MCF 10A (cell line): ENCODE measurements at regions of chr18 and their contacts with region 1.

Region 1: GRCh38 chr18:21242141-21242779 is at the start of gene GREB1L:
- DNase-seq: peak; percentile 67
- H3K4me3 Mint-ChIP-seq: peak within 1 kb of the TSS; percentile 78
- H3K27ac Mint-ChIP-seq: peak within 1 kb of the TSS; percentile 49
- H3K4me1 Mint-ChIP-seq: peaks cover 5% of the 10 kb centered on the region
- H3K27me3 Mint-ChIP-seq: no peaks in the 10 kb centered on the region
- CTCF ChIP-seq: peak; percentile 35
- total RNA-seq, gene GREB1L: 9.4 and 11.0 TPM in 2 replicates

Region 2: GRCh38 chr18:21257386-21257785 is 15.1 kb after region 1 on chr18:
- CTCF ChIA-PET with region 1: interaction called, 10 read pairs
- POLR2A ChIA-PET with region 1: interaction called, 9 read pairs
- intact Hi-C with region 1: no loop called
- DNase-seq: no peak
- H3K4me3 Mint-ChIP-seq: no peak overlapping the region
- H3K27ac Mint-ChIP-seq: no peak overlapping the region
- H3K4me1 Mint-ChIP-seq: peaks cover 3% of the 10 kb centered on the region
- H3K27me3 Mint-ChIP-seq: no peaks in the 10 kb centered on the region
- CTCF ChIP-seq: no peak

Region 3: GRCh38 chr18:21315741-21316187 is 73.5 kb after region 1 on chr18:
- CTCF ChIA-PET with region 1: no interaction called
- POLR2A ChIA-PET with region 1: no interaction called
- intact Hi-C with region 1: no loop called
- DNase-seq: no peak
- H3K4me3 Mint-ChIP-seq: no peak overlapping the region
- H3K27ac Mint-ChIP-seq: no peak overlapping the region
- H3K4me1 Mint-ChIP-seq: peaks cover 19% of the 10 kb centered on the region
- H3K27me3 Mint-ChIP-seq: no peaks in the 10 kb centered on the region
- CTCF ChIP-seq: no peak

Region 4: DNA sequence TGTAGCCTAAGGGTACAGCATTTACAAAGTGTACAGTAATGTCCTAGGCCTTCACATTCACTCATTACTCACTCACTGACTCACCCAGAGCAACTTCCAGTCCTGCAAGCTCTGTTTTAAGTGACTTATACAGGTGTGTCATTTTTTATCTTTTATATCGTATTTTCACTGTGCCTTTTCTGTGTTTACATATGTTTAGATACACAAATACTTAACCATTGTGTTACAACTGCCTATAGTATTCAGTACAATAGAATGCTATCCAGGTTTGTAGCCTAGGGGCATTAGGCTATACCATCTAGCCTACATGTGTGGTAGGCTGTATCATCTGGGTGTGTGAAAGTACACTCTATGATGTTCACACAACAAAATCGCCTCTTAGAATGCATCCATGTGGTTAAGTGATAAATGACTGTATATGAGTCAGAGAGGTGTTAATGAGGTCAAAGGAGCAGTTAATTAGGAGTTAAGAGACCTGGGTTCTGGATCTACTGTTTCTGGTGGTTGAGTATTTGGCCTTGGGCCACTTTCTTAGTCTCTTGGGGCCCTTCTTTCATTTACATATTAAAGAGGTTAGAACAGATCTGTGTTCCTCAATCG is 148.9 kb after region 1 on chr18:
- CTCF ChIA-PET with region 1: no interaction called
- POLR2A ChIA-PET with region 1: interaction called, 4 read pairs
- intact Hi-C with region 1: loop called (anchors 5 kb)
- DNase-seq: peak; percentile 84
- H3K4me3 Mint-ChIP-seq: peak overlapping the region; percentile 23
- H3K27ac Mint-ChIP-seq: peak overlapping the region; percentile 51
- H3K4me1 Mint-ChIP-seq: peaks cover 16% of the 10 kb centered on the region
- H3K27me3 Mint-ChIP-seq: no peaks in the 10 kb centered on the region
- CTCF ChIP-seq: no peak

Region 5: GRCh38 chr18:21439446-21439846 is 197.2 kb after region 1 on chr18:
- CTCF ChIA-PET with region 1: interaction called, 27 read pairs
- POLR2A ChIA-PET with region 1: interaction called, 8 read pairs
- intact Hi-C with region 1: loop called (anchors 1 kb)
- DNase-seq: peak; percentile 84
- H3K4me3 Mint-ChIP-seq: no peak overlapping the region
- H3K27ac Mint-ChIP-seq: peak overlapping the region; percentile 87
- H3K4me1 Mint-ChIP-seq: peaks cover 20% of the 10 kb centered on the region
- H3K27me3 Mint-ChIP-seq: no peaks in the 10 kb centered on the region
- CTCF ChIP-seq: no peak